ENCODE measurements at regions of chr4 and their contacts with region 1.

Region 1: DNA sequence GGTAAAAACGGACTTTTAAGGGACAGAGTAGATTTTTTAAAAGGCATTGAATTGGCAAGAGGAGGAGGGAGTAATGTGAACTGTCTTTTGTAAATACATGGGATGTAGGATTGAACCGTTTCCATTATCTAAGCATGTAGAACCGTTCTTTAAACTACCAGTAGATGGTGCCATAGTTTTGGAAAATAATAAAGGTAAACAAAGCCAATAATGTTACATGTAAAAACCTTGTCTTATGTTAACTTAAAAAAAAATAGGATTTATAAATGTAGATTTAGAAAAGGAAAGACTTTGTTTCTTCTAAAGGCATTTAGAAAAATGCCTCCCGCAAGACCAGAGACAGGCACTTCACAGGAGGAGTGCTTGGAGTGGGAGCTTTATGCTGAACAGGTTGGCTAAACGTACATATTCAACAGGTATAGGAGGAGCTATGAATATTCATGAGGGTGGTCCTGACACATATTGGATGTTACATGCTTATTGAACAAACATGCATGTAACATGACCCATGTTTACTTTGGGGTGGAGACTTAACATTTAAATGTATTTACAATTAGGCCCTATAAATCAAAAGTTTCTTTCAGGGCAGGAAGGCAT is 45.5 kb upstream of the FAM241A start:
- DNase-seq: no peak
- ATAC-seq: peak; percentile 90 to 96 (median 92)
- H3K4me3 ChIP-seq: no peak overlapping the region
- H3K27ac ChIP-seq: no peak overlapping the region
- H3K4me1 ChIP-seq: peaks cover 0 to 6% (median 0%) of the 10 kb centered on the region in 4 donors
- H3K27me3 ChIP-seq: no peaks in the 10 kb centered on the region
- CTCF ChIP-seq: peak; percentile 64 to 81 (median 74)
- POLR2A ChIP-seq: no peak

Region 2: DNA sequence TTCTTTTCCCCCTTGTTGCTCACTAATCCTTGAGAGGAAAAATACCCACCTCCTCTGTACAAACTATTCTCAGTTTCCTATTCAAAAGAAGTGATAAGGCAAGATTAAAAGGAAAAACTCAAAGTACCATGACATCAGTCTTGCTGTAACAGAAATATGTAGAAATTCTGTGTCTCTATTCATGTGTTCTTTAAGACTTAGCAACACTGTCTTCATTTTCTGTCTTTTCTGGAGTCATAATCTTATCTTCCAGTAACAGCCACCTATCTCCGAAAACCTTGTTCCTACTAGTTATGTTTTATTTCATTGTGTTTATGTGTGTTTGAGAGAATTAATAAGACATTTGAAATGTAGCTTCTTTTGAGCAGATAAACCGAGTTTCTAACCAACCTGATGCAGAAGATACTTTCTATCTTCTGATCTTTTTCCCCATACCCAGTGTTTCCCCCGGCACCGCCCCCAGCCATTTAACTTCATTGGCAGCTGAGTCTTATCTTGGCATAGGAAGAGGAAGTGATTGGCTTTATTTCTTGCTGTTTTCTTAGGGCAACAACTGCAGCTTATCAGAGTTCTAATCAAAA is 53.5 kb after region 1 on chr4:
- intact Hi-C with region 1: no loop called
- DNase-seq: no peak
- ATAC-seq: no peak
- H3K4me3 ChIP-seq: no peak overlapping the region
- H3K27ac ChIP-seq: no peak overlapping the region
- H3K4me1 ChIP-seq: peaks cover 0 to 11% (median 0%) of the 10 kb centered on the region in 4 donors
- H3K27me3 ChIP-seq: no peaks in the 10 kb centered on the region
- CTCF ChIP-seq: no peak
- POLR2A ChIP-seq: no peak

Region 3: DNA sequence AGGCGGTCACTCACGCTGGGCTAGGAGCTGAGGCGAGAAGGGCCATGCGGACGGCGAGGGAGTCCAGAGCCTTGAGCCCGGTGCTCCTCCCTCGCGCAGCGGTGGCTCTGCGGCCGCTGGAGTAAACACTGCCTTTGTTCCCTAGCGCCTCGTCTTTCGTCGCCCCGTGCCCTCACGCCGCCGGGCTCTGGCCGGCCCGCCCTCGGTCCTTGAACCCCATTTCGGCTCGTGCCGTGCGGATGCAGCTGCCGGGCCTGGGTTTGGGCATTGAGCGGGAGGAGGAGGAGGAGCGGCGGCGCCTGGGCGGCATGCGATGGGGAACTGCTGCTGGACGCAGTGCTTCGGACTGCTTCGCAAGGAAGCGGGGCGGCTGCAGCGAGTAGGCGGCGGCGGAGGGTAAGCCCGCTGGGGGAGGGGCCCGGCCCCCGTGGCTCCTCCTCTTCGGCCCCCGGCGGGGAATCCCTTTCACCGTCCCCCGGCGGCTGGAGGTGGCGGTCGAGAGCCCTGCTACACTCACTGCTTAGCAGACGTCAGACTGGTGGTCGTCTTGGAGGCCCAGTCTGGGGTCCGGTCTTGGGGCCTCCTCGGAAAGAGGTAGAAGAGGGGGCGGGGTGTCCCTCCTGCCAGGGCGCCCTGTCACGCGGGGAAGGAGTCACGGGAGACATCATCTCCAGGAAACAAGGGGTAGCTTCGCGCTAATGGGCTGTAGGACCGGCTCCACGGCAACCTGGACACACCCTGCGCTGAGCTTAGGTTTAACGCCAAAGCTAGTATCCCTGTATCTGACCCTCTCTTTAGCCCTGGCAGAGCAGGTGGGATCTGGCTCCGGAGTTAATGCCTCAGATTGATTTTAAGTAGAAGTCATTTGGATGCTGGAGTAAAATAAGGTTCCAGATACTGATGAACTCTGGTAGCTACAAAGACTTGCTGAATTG is 132.2 kb after region 1 on chr4 and contains the start of gene AP1AR:
- intact Hi-C with region 1: loop called in 1 of 2 experiments (anchors 10 kb)
- DNase-seq: peak; percentile 82 to 90 (median 86)
- ATAC-seq: peak; percentile 72 to 80 (median 77)
- H3K4me3 ChIP-seq: peak within 1 kb of the TSS; percentile 87 to 94 (median 94)
- H3K27ac ChIP-seq: peak within 1 kb of the TSS; percentile 95 to 99 (median 96)
- H3K4me1 ChIP-seq: peaks cover 0 to 17% (median 7%) of the 10 kb centered on the region in 4 donors
- H3K27me3 ChIP-seq: no peaks in the 10 kb centered on the region
- CTCF ChIP-seq: peak in 3 of 4 donors; percentile 12 to 27 (median 26)
- POLR2A ChIP-seq: peak; percentile 95
- total RNA-seq, gene AP1AR: 9.2 to 13.8 (median 11.1) TPM

Region 4: GRCh38 chr4:112253382-112254000 is 153.7 kb after region 1 on chr4:
- intact Hi-C with region 1: loop called in 1 of 2 experiments (anchors 10 kb)
- DNase-seq: no peak
- ATAC-seq: no peak
- H3K4me3 ChIP-seq: no peak overlapping the region
- H3K27ac ChIP-seq: no peak overlapping the region
- H3K4me1 ChIP-seq: peaks cover 0 to 12% (median 0%) of the 10 kb centered on the region in 4 donors
- H3K27me3 ChIP-seq: no peaks in the 10 kb centered on the region
- CTCF ChIP-seq: no peak
- POLR2A ChIP-seq: no peak